Endothelial cell of umbilical vein (primary cell): ENCODE measurements at regions of chr6 and their contacts with region 1.

Region 1: GRCh38 chr6:33276864-33277662 is at the start of gene B3GALT4:
- DNase-seq: peak; percentile 67
- H3K4me3 ChIP-seq: peak within 1 kb of the TSS in 2 of 3 experiments; percentile 26 to 53
- H3K27ac ChIP-seq: peak within 1 kb of the TSS; percentile 4
- H3K4me1 ChIP-seq: peaks cover 43% of the 10 kb centered on the region
- H3K27me3 ChIP-seq: no peaks in the 10 kb centered on the region
- CTCF ChIP-seq: peak; percentile 35 to 66
- POLR2A ChIP-seq: peak; percentile 96
- total RNA-seq, gene B3GALT4: 4.1 and 4.5 TPM in 2 replicates

Region 2: GRCh38 chr6:33288921-33289748 is 12.1 kb after region 1 on chr6 and contains the starts of genes PFDN6 and WDR46:
- CTCF ChIA-PET with region 1: interaction called, 17 read pairs
- POLR2A ChIA-PET with region 1: interaction called, 4 read pairs
- dilution Hi-C with region 1: no loop called
- intact Hi-C with region 1: no loop called
- DNase-seq: peak; percentile 96
- H3K4me3 ChIP-seq: peak within 1 kb of the TSS; percentile 59 to 96 (median 88)
- H3K27ac ChIP-seq: peak within 1 kb of the TSS; percentile 16
- H3K4me1 ChIP-seq: peaks cover 13% of the 10 kb centered on the region
- H3K27me3 ChIP-seq: no peaks in the 10 kb centered on the region
- CTCF ChIP-seq: no peak
- POLR2A ChIP-seq: peak; percentile 81
- total RNA-seq, gene PFDN6: 52.3 and 63.5 TPM in 2 replicates
- total RNA-seq, gene WDR46: 66.9 and 71.2 TPM in 2 replicates

Region 3: GRCh38 chr6:33299237-33299944 is 22.3 kb after region 1 on chr6:
- CTCF ChIA-PET with region 1: interaction called, 39 read pairs
- POLR2A ChIA-PET with region 1: interaction called, 8 read pairs
- dilution Hi-C with region 1: no loop called
- intact Hi-C with region 1: loop called (anchors 1 kb)
- DNase-seq: peak; percentile 88
- H3K4me3 ChIP-seq: peak overlapping the region; percentile 55 to 82 (median 67)
- H3K27ac ChIP-seq: peak overlapping the region; percentile 80
- H3K4me1 ChIP-seq: peaks cover 13% of the 10 kb centered on the region
- H3K27me3 ChIP-seq: no peaks in the 10 kb centered on the region
- CTCF ChIP-seq: peak; percentile 70 to 84
- POLR2A ChIP-seq: peak; percentile 98

Region 4: DNA sequence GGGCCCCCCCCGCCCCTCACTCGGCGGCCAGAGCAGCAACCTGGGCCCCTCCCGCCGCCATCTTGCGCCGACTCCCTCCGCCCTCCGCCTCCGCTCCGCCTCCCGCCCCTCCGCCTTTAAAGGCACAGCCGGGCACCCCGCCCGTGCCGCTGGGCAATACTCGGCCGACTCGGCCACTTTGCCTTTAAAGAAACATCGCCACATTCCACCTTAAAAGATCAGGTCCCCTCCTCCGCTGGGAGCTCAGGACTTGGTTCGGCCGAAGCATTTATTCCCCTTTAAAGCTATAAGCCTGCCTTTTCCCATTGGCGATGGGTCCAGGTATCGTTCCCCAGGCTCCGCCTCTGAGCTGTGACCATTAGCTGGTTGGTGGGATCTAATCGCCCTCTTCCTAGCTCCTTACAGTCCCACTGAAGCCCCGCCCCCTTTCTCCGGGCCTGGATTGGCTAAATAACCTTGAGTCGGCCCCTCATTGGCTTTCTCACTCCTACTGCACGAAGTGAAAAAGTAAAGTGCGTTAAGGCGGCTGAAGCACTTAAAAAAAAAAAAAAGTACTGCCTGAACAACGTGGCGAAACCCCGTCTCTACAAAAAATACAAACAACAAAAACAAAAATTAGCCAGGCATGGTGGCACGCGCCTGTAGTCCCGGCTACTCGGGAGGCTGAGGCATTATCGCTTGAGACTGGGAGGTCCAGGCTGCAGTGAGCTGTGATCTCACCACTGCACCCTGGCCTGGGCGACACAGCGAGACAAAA is 40.8 kb after region 1 on chr6 and contains the start of gene ZBTB22:
- CTCF ChIA-PET with region 1: interaction called, 5 read pairs
- POLR2A ChIA-PET with region 1: interaction called, 6 read pairs
- dilution Hi-C with region 1: no loop called
- intact Hi-C with region 1: loop called (anchors 2 kb)
- DNase-seq: peak; percentile 99
- H3K4me3 ChIP-seq: peak within 1 kb of the TSS; percentile 60 to 87 (median 87)
- H3K27ac ChIP-seq: peak within 1 kb of the TSS; percentile 71
- H3K4me1 ChIP-seq: peaks cover 55% of the 10 kb centered on the region
- H3K27me3 ChIP-seq: no peaks in the 10 kb centered on the region
- CTCF ChIP-seq: no peak
- POLR2A ChIP-seq: no peak
- total RNA-seq, gene ZBTB22: 12.6 and 13.9 TPM in 2 replicates

Region 5: GRCh38 chr6:33344701-33345697 is 67.9 kb after region 1 on chr6:
- CTCF ChIA-PET with region 1: interaction called, 8 read pairs
- POLR2A ChIA-PET with region 1: no interaction called
- dilution Hi-C with region 1: no loop called
- intact Hi-C with region 1: loop called (anchors 1 kb)
- DNase-seq: peak; percentile 84
- H3K4me3 ChIP-seq: no peak overlapping the region
- H3K27ac ChIP-seq: no peak overlapping the region
- H3K4me1 ChIP-seq: no peaks in the 10 kb centered on the region
- H3K27me3 ChIP-seq: no peaks in the 10 kb centered on the region
- CTCF ChIP-seq: peak; percentile 41 to 54
- POLR2A ChIP-seq: no peak

Region 6: GRCh38 chr6:33410050-33410710 is 133.1 kb after region 1 on chr6:
- CTCF ChIA-PET with region 1: interaction called, 4 read pairs
- POLR2A ChIA-PET with region 1: no interaction called
- dilution Hi-C with region 1: no loop called
- intact Hi-C with region 1: loop called (anchors 1 kb)
- DNase-seq: peak; percentile 99
- H3K4me3 ChIP-seq: peak overlapping the region; percentile 41 to 85 (median 71)
- H3K27ac ChIP-seq: peak overlapping the region; percentile 73
- H3K4me1 ChIP-seq: peaks cover 10% of the 10 kb centered on the region
- H3K27me3 ChIP-seq: no peaks in the 10 kb centered on the region
- CTCF ChIP-seq: no peak
- POLR2A ChIP-seq: peak; percentile 60